ENCODE measurements at regions of chr16 and their contacts with region 1.

Region 1: GRCh38 chr16:1363501-1364041 is 11.8 kb downstream of the GNPTG start:
- DNase-seq: peak; percentile 46
- ATAC-seq: peak; percentile 80
- H3K4me3 ChIP-seq: no peak overlapping the region
- H3K27ac ChIP-seq: no peak overlapping the region
- H3K4me1 ChIP-seq: 0 out of 2 replicates have a peak, but pooled peaks cover under 1% of the 10 kb centered on the region
- H3K27me3 ChIP-seq: no peaks in the 10 kb centered on the region
- CTCF ChIP-seq: peak; percentile 72

Region 2: GRCh38 chr16:777826-778225 is 585.7 kb before region 1 on chr16:
- CTCF ChIA-PET with region 1: interaction called, 10 read pairs
- POLR2A ChIA-PET with region 1: no interaction called
- intact Hi-C with region 1: no loop called
- DNase-seq: peak; percentile 27
- ATAC-seq: peak; percentile 48; the same call in 1 of the 2 replicates
- H3K4me3 ChIP-seq: no peak overlapping the region
- H3K27ac ChIP-seq: no peak overlapping the region
- H3K4me1 ChIP-seq: peaks cover under 1% of the 10 kb centered on the region
- H3K27me3 ChIP-seq: no peaks in the 10 kb centered on the region
- CTCF ChIP-seq: no peak

Region 3: DNA sequence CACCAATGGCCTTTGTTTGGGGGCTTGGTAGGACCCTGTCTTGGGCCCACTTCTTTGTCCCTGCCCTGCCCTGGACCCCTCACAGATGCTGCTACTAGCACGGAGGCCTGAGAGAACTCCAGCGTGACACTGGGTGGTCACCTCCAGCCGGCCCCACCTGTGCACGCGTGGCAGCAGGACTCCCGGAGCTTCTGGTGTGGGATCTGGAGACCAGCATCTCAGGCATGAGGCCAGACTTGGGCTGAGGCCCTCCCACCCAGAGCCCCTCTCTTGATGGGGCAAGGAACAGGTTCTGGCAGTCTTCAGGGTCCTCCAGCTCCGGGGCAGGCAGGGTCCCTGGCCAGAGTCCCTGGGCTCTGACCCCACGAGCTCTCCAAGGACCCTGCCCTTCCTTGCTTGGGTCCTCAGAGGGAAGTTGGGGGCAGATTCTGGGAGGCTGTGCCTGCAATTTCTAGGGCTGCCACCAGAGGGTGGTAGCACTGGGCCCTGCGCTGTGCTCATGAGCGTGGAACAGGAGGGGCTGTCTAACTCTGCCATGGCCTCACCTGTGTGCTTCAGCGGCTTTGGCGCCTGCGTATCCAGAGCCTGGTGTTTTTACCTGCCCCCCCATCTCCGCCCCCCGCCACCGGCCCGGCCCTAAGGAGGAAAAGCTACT is 33.2 kb before region 1 on chr16:
- CTCF ChIA-PET with region 1: interaction called, 16 read pairs
- POLR2A ChIA-PET with region 1: no interaction called
- intact Hi-C with region 1: no loop called
- DNase-seq: peak; percentile 57
- ATAC-seq: peak; percentile 34; the same call in 1 of the 2 replicates
- H3K4me3 ChIP-seq: no peak overlapping the region
- H3K27ac ChIP-seq: no peak overlapping the region
- H3K4me1 ChIP-seq: peaks cover 12% of the 10 kb centered on the region; the same call in 1 of the 2 replicates
- H3K27me3 ChIP-seq: no peaks in the 10 kb centered on the region
- CTCF ChIP-seq: peak; percentile 62

Measured in PC-3 (cell line).